GM12878 (cell line): ENCODE measurements at regions of chr20 and their contacts with region 1.

Region 1: GRCh38 chr20:4813863-4814695 is 92.4 kb downstream of the PRND start:
- DNase-seq: peak; percentile 91
- ATAC-seq: peak; percentile 63
- H3K4me3 ChIP-seq: peak overlapping the region; percentile 71
- H3K27ac ChIP-seq: peak overlapping the region; percentile 98
- H3K4me1 ChIP-seq: peaks cover 66% of the 10 kb centered on the region
- H3K27me3 ChIP-seq: no peaks in the 10 kb centered on the region
- CTCF ChIP-seq: peak in 2 of 3 experiments; percentile 1 to 10; a peak in 1 of 6 replicates
- EP300 ChIP-seq: peak in 1 of 2 experiments; percentile 62; a peak in 2 of 4 replicates
- POLR2A ChIP-seq: no peak; the same call in 1 of the 2 replicates
- RAD21 ChIP-seq: no peak

Region 2: GRCh38 chr20:4180356-4180755 is 633.7 kb before region 1 on chr20:
- CTCF ChIA-PET with region 1: no interaction called
- POLR2A ChIA-PET with region 1: no interaction called
- RAD21 ChIA-PET with region 1: no interaction called
- SMC1A ChIA-PET with region 1: no interaction called
- in situ Hi-C with region 1: no loop called
- intact Hi-C with region 1: no loop called
- DNase-seq: no peak
- ATAC-seq: no peak
- H3K4me3 ChIP-seq: no peak overlapping the region
- H3K27ac ChIP-seq: no peak overlapping the region
- H3K4me1 ChIP-seq: no peaks in the 10 kb centered on the region
- H3K27me3 ChIP-seq: no peaks in the 10 kb centered on the region
- CTCF ChIP-seq: no peak
- EP300 ChIP-seq: no peak
- POLR2A ChIP-seq: no peak
- RAD21 ChIP-seq: no peak

Region 3: GRCh38 chr20:4383966-4384365 is 430.1 kb before region 1 on chr20:
- CTCF ChIA-PET with region 1: no interaction called
- POLR2A ChIA-PET with region 1: no interaction called
- RAD21 ChIA-PET with region 1: no interaction called
- SMC1A ChIA-PET with region 1: no interaction called
- in situ Hi-C with region 1: no loop called
- intact Hi-C with region 1: no loop called
- DNase-seq: no peak
- ATAC-seq: no peak
- H3K4me3 ChIP-seq: no peak overlapping the region
- H3K27ac ChIP-seq: no peak overlapping the region
- H3K4me1 ChIP-seq: no peaks in the 10 kb centered on the region
- H3K27me3 ChIP-seq: no peaks in the 10 kb centered on the region
- CTCF ChIP-seq: no peak
- EP300 ChIP-seq: no peak
- POLR2A ChIP-seq: no peak
- RAD21 ChIP-seq: no peak

Region 4: GRCh38 chr20:4702562-4703280 is 111.4 kb before region 1 on chr20:
- CTCF ChIA-PET with region 1: no interaction called
- POLR2A ChIA-PET with region 1: no interaction called
- RAD21 ChIA-PET with region 1: no interaction called
- SMC1A ChIA-PET with region 1: no interaction called
- in situ Hi-C with region 1: no loop called
- intact Hi-C with region 1: no loop called
- DNase-seq: no peak
- ATAC-seq: no peak
- H3K4me3 ChIP-seq: no peak overlapping the region
- H3K27ac ChIP-seq: no peak overlapping the region
- H3K4me1 ChIP-seq: no peaks in the 10 kb centered on the region
- H3K27me3 ChIP-seq: no peaks in the 10 kb centered on the region; a peak in 1 of 4 replicates
- CTCF ChIP-seq: no peak
- EP300 ChIP-seq: no peak
- POLR2A ChIP-seq: no peak
- RAD21 ChIP-seq: no peak

Region 5: DNA sequence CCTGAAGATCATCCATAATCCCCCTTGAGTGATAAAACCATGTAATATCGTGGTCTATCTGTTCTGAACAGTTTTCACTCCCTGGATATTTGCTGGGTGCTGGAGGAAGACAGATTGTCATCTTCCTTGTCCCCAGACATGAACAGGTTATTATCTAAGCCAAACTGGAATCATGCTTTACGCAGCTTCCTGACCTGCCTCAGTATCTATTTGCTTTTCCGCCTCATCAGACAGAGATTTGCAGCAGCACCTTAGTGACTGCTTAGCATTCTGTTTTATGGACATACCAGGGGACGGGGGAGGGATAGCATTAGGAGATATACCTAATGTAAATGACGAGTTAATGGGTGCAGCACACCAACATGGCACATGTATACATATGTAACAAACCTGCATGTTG is 62.7 kb after region 1 on chr20:
- CTCF ChIA-PET with region 1: interaction called, 4 read pairs
- POLR2A ChIA-PET with region 1: interaction called, 7 read pairs
- RAD21 ChIA-PET with region 1: interaction called, 4 read pairs
- SMC1A ChIA-PET with region 1: interaction called, 13 read pairs
- in situ Hi-C with region 1: no loop called
- intact Hi-C with region 1: no loop called
- DNase-seq: no peak
- ATAC-seq: no peak
- H3K4me3 ChIP-seq: no peak overlapping the region
- H3K27ac ChIP-seq: no peak overlapping the region
- H3K4me1 ChIP-seq: peaks cover 4% of the 10 kb centered on the region
- H3K27me3 ChIP-seq: no peaks in the 10 kb centered on the region
- CTCF ChIP-seq: no peak
- EP300 ChIP-seq: no peak
- POLR2A ChIP-seq: no peak
- RAD21 ChIP-seq: no peak

Region 6: GRCh38 chr20:4949833-4950178 is 135.7 kb after region 1 on chr20:
- CTCF ChIA-PET with region 1: interaction called, 11 read pairs
- POLR2A ChIA-PET with region 1: interaction called, 4 read pairs
- RAD21 ChIA-PET with region 1: interaction called, 14 read pairs
- SMC1A ChIA-PET with region 1: interaction called, 19 read pairs
- in situ Hi-C with region 1: no loop called
- intact Hi-C with region 1: loop called (anchors 5 kb)
- DNase-seq: no peak
- ATAC-seq: peak; percentile 82
- H3K4me3 ChIP-seq: 0 out of 2 replicates have a peak overlapping the region, but pooled peaks have one; percentile 37
- H3K27ac ChIP-seq: peak overlapping the region; percentile 24; the same call in 1 of the 2 replicates
- H3K4me1 ChIP-seq: peaks cover 21% of the 10 kb centered on the region
- H3K27me3 ChIP-seq: no peaks in the 10 kb centered on the region
- CTCF ChIP-seq: peak; percentile 60 to 82 (median 72); a peak in 5 of 6 replicates
- EP300 ChIP-seq: no peak
- POLR2A ChIP-seq: no peak
- RAD21 ChIP-seq: peak; percentile 85

Region 7: DNA sequence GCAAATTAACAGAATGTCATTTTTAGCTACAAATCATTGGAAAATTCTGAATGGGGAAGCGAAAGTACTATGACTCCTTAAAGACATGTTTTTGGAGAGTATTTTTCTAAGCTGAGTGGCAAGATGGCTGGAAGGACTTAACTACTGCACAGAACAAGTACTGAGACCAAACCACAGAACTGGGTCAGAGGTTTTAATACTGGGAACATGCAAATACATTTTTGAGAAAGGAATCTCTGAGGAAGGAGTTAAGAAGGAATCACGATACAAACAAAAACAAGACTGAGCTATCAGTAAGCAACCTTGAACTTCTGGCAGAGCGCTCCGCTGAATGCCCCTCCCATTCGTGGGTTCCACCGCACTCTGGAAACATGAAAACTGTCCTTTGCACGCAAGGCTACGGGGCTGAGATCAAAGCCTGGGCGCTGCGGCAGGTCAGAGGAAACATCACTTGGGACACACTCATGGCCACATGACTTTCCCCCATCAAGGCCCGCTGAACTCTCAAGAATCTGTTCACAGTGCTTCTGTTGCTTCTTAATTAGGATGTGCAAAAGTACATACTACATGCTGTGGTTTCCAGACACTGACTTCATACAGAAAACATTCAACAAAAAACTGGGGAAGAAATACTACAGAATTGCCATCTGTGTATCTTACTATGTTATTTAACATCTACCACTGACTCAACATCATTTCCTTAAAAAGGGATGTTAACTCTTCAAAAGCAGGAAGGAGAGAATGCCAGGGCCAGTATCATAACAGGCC is 159.4 kb after region 1 on chr20:
- CTCF ChIA-PET with region 1: no interaction called
- POLR2A ChIA-PET with region 1: no interaction called
- RAD21 ChIA-PET with region 1: interaction called, 4 read pairs
- SMC1A ChIA-PET with region 1: interaction called, 7 read pairs
- in situ Hi-C with region 1: no loop called
- intact Hi-C with region 1: loop called (anchors 1 kb)
- DNase-seq: peak; percentile 85
- ATAC-seq: peak; percentile 94
- H3K4me3 ChIP-seq: peak overlapping the region; percentile 42
- H3K27ac ChIP-seq: peak overlapping the region; percentile 76
- H3K4me1 ChIP-seq: peaks cover 4% of the 10 kb centered on the region
- H3K27me3 ChIP-seq: no peaks in the 10 kb centered on the region
- CTCF ChIP-seq: no peak
- EP300 ChIP-seq: peak; percentile 94 to 97
- POLR2A ChIP-seq: peak; percentile 45; the same call in 1 of the 2 replicates
- RAD21 ChIP-seq: 0 out of 2 replicates have a peak, but pooled peaks have one; percentile 12

Region 8: DNA sequence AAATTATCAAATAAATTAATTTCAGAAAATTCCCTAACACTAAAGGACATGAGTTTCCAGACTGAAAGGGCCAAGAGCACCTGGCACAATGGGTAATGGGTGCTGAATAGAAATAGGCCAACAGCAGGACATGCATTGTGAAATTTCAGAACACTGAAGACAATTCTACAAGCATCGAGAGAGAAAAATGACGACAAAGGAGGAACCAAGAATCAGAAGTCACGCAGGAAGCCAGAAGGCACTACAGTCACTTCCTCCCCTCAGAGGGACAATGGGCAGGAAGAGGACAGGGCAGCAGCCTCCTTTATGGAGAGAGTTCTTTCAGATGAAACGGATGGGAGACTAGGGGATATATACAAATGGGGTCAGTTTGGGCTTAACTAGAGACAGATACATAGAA is 276.1 kb after region 1 on chr20:
- CTCF ChIA-PET with region 1: no interaction called
- POLR2A ChIA-PET with region 1: no interaction called
- RAD21 ChIA-PET with region 1: no interaction called
- SMC1A ChIA-PET with region 1: interaction called, 5 read pairs
- in situ Hi-C with region 1: no loop called
- intact Hi-C with region 1: loop called (anchors 5 kb)
- DNase-seq: no peak
- ATAC-seq: peak; percentile 93
- H3K4me3 ChIP-seq: no peak overlapping the region
- H3K27ac ChIP-seq: no peak overlapping the region
- H3K4me1 ChIP-seq: no peaks in the 10 kb centered on the region
- H3K27me3 ChIP-seq: no peaks in the 10 kb centered on the region
- CTCF ChIP-seq: no peak
- EP300 ChIP-seq: peak; percentile 64 to 72; a peak in 2 of 4 replicates
- POLR2A ChIP-seq: no peak
- RAD21 ChIP-seq: no peak

Region 9: GRCh38 chr20:5119435-5120188 is 305.5 kb after region 1 on chr20 and contains the start of gene PCNA:
- CTCF ChIA-PET with region 1: interaction called, 3 read pairs
- POLR2A ChIA-PET with region 1: interaction called, 5 read pairs
- RAD21 ChIA-PET with region 1: interaction called, 3 read pairs
- SMC1A ChIA-PET with region 1: interaction called, 3 read pairs
- in situ Hi-C with region 1: no loop called
- intact Hi-C with region 1: loop called (anchors 5 kb)
- DNase-seq: peak; percentile 90
- ATAC-seq: peak; percentile 94
- H3K4me3 ChIP-seq: peak within 1 kb of the TSS; percentile 84
- H3K27ac ChIP-seq: peak within 1 kb of the TSS; percentile 94
- H3K4me1 ChIP-seq: peaks cover 4% of the 10 kb centered on the region; the same call in 1 of the 2 replicates
- H3K27me3 ChIP-seq: no peaks in the 10 kb centered on the region
- CTCF ChIP-seq: no peak
- EP300 ChIP-seq: no peak
- POLR2A ChIP-seq: peak; percentile 98
- RAD21 ChIP-seq: no peak
- polyA plus RNA-seq, gene PCNA: 651 to 694 TPM